HCT116 (cell line): ENCODE measurements at regions of chr17 and their contacts with region 1.

Region 1: GRCh38 chr17:34361478-34362061 is 1.5 kb downstream of the CCL1 start:
- DNase-seq: peak; percentile 68
- ATAC-seq: peak; percentile 98
- H3K4me3 ChIP-seq: no peak overlapping the region
- H3K27ac ChIP-seq: no peak overlapping the region
- H3K4me1 ChIP-seq: no peaks in the 10 kb centered on the region
- H3K27me3 ChIP-seq: peaks cover 11% of the 10 kb centered on the region; the same call in 1 of the 2 replicates
- CTCF ChIP-seq: peak; percentile 99
- POLR2A ChIP-seq: no peak
- RAD21 ChIP-seq: peak; percentile 85

Region 2: DNA sequence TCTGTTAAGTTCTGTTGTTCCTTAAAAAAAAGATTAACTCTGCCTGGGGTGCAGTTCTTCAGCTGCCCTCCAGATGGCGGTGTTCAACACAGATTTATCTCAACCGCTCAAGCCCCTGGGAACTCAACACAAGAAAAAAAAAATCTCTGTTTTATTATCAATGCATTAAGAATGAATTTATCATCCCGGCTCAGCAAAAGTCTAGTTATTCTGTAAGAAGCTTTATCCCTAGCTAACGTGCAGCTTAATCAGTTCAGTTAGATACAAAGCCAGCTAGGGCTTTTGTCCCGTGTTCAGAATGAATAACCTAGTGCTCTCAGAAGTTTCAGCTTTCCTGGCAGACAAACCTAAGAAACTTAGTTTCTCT is 582.4 kb before region 1 on chr17:
- CTCF ChIA-PET with region 1: no interaction called
- POLR2A ChIA-PET with region 1: no interaction called
- RAD21 ChIA-PET with region 1: no interaction called
- intact Hi-C with region 1: loop called (anchors 1 kb)
- DNase-seq: peak; percentile 15
- ATAC-seq: 0 out of 2 replicates have a peak, but pooled peaks have one; percentile 22
- H3K4me3 ChIP-seq: no peak overlapping the region
- H3K27ac ChIP-seq: no peak overlapping the region
- H3K4me1 ChIP-seq: no peaks in the 10 kb centered on the region
- H3K27me3 ChIP-seq: no peaks in the 10 kb centered on the region
- CTCF ChIP-seq: peak; percentile 32 to 90 (median 77); a peak in 5 of 6 replicates
- POLR2A ChIP-seq: no peak
- RAD21 ChIP-seq: peak; percentile 40; the same call in 1 of the 2 replicates

Region 3: GRCh38 chr17:34171245-34171818 is 190.2 kb before region 1 on chr17:
- CTCF ChIA-PET with region 1: interaction called, 16 read pairs
- POLR2A ChIA-PET with region 1: no interaction called
- RAD21 ChIA-PET with region 1: no interaction called
- intact Hi-C with region 1: loop called (anchors 1 kb)
- DNase-seq: peak; percentile 12
- ATAC-seq: peak; percentile 70
- H3K4me3 ChIP-seq: no peak overlapping the region
- H3K27ac ChIP-seq: no peak overlapping the region
- H3K4me1 ChIP-seq: no peaks in the 10 kb centered on the region
- H3K27me3 ChIP-seq: no peaks in the 10 kb centered on the region
- CTCF ChIP-seq: peak; percentile 10 to 80 (median 80); a peak in 4 of 6 replicates
- POLR2A ChIP-seq: no peak
- RAD21 ChIP-seq: 0 out of 2 replicates have a peak, but pooled peaks have one; percentile 16

Region 4: GRCh38 chr17:34199932-34200534 is 161.5 kb before region 1 on chr17:
- CTCF ChIA-PET with region 1: interaction called, 47 read pairs
- POLR2A ChIA-PET with region 1: no interaction called
- RAD21 ChIA-PET with region 1: interaction called in 1 of 2 experiments, 4 read pairs
- intact Hi-C with region 1: loop called (anchors 1 kb)
- DNase-seq: peak; percentile 55
- ATAC-seq: peak; percentile 87
- H3K4me3 ChIP-seq: no peak overlapping the region
- H3K27ac ChIP-seq: no peak overlapping the region
- H3K4me1 ChIP-seq: no peaks in the 10 kb centered on the region
- H3K27me3 ChIP-seq: no peaks in the 10 kb centered on the region
- CTCF ChIP-seq: peak; percentile 98 to 99 (median 99)
- POLR2A ChIP-seq: no peak
- RAD21 ChIP-seq: peak; percentile 79

Region 5: DNA sequence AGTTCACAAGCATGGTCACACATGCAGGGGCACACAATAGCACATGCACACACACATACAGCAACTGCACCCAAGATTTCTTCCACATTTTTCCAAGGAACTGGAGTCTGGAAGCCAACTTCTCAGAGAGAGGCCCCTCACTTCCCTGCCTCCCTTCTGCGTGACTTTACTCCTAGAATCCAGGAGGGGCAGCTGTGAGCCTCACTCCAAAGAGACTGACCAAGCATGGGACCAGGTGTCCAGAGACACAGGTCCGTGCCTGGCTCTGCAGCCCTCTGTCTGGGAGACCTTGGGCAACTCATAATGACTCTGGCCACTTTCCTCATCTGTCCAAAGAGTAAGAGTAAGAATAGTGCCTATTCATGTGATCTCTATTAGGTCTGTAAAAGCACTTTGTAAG is 113.1 kb after region 1 on chr17:
- CTCF ChIA-PET with region 1: no interaction called
- POLR2A ChIA-PET with region 1: no interaction called
- RAD21 ChIA-PET with region 1: no interaction called
- intact Hi-C with region 1: no loop called
- DNase-seq: no peak
- ATAC-seq: peak; percentile 79
- H3K4me3 ChIP-seq: no peak overlapping the region
- H3K27ac ChIP-seq: no peak overlapping the region
- H3K4me1 ChIP-seq: no peaks in the 10 kb centered on the region
- H3K27me3 ChIP-seq: peaks cover 37% of the 10 kb centered on the region
- CTCF ChIP-seq: peak in 2 of 3 experiments; percentile 21 to 31; a peak in 2 of 6 replicates
- POLR2A ChIP-seq: no peak
- RAD21 ChIP-seq: no peak